ENCODE measurements at regions of chr21 and their contacts with region 1.

Region 1: DNA sequence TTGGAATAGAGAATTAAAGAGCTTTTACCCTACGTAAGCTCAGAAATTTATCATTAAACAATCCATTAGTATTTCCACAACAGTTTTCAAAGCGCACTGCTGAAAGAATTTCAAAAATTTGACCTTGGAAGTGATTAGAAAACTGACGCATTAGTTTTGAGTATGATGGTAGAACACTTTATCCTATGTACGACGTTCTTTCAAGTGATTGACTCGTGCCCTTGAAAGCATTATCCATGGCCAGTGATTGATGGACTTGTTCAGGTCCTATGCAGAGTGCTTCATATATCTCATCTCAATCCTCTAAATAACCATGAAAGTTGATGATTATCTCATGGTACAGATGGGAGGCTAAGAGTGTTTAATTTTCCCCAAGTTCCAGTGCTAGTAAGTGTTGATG is 697.2 kb downstream of the USP25 start:
- DNase-seq: peak; percentile 65
- H3K4me3 ChIP-seq: peak overlapping the region in 1 of 3 experiments; percentile 21
- H3K27ac ChIP-seq: peak overlapping the region; percentile 85
- H3K4me1 ChIP-seq: peaks cover 52% of the 10 kb centered on the region
- H3K27me3 ChIP-seq: no peaks in the 10 kb centered on the region
- CTCF ChIP-seq: no peak
- POLR2A ChIP-seq: no peak

Region 2: DNA sequence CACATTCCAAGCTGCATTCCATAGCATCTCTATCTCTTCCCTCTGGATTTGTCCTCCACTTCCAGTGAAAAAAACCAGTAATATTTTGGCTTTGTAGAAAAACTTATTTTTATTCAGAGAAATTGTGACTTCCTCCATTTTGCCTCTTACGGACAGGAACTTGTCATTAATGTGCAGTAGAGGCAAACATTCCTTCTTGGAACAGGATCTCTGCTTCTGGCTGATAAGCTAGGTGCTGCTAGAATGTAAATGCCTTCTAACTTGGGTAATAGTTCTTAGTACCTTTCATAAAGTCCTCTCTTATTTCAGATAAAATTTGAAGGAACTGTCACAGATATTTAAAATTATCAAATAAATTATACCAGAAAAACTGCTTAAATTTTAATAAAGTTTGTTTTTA is 10.7 kb after region 1 on chr21:
- CTCF ChIA-PET with region 1: interaction called, 3 read pairs
- POLR2A ChIA-PET with region 1: no interaction called
- dilution Hi-C with region 1: no loop called
- intact Hi-C with region 1: loop called (anchors 1 kb)
- DNase-seq: peak; percentile 86
- H3K4me3 ChIP-seq: no peak overlapping the region
- H3K27ac ChIP-seq: no peak overlapping the region
- H3K4me1 ChIP-seq: peaks cover 22% of the 10 kb centered on the region
- H3K27me3 ChIP-seq: no peaks in the 10 kb centered on the region
- CTCF ChIP-seq: no peak
- POLR2A ChIP-seq: no peak

Region 3: GRCh38 chr21:16551101-16551695 is 124.3 kb after region 1 on chr21:
- CTCF ChIA-PET with region 1: no interaction called
- POLR2A ChIA-PET with region 1: no interaction called
- dilution Hi-C with region 1: no loop called
- intact Hi-C with region 1: loop called (anchors 5 kb)
- DNase-seq: peak; percentile 54
- H3K4me3 ChIP-seq: no peak overlapping the region
- H3K27ac ChIP-seq: peak overlapping the region; percentile 71
- H3K4me1 ChIP-seq: peaks cover 41% of the 10 kb centered on the region
- H3K27me3 ChIP-seq: no peaks in the 10 kb centered on the region
- CTCF ChIP-seq: no peak
- POLR2A ChIP-seq: no peak